ENCODE measurements at regions of chr2 and their contacts with region 1.

Region 1: GRCh38 chr2:197239434-197239833 is 71.1 kb downstream of the ANKRD44 start:
- DNase-seq: peak in 1 of 5 donors; percentile 22
- H3K4me3 ChIP-seq: peak overlapping the region; percentile 45
- H3K4me3 Mint-ChIP-seq: peak overlapping the region; percentile 76 to 92 (median 87)
- H3K27ac ChIP-seq: peak overlapping the region; percentile 20
- H3K27ac Mint-ChIP-seq: peak overlapping the region; percentile 74 to 99 (median 94)
- H3K4me1 ChIP-seq: peaks cover 97% of the 10 kb centered on the region
- H3K4me1 Mint-ChIP-seq: peaks cover 85 to 98% (median 92%) of the 10 kb centered on the region in 3 donors
- H3K27me3 ChIP-seq: no peaks in the 10 kb centered on the region
- H3K27me3 Mint-ChIP-seq: no peaks in the 10 kb centered on the region

Region 2: DNA sequence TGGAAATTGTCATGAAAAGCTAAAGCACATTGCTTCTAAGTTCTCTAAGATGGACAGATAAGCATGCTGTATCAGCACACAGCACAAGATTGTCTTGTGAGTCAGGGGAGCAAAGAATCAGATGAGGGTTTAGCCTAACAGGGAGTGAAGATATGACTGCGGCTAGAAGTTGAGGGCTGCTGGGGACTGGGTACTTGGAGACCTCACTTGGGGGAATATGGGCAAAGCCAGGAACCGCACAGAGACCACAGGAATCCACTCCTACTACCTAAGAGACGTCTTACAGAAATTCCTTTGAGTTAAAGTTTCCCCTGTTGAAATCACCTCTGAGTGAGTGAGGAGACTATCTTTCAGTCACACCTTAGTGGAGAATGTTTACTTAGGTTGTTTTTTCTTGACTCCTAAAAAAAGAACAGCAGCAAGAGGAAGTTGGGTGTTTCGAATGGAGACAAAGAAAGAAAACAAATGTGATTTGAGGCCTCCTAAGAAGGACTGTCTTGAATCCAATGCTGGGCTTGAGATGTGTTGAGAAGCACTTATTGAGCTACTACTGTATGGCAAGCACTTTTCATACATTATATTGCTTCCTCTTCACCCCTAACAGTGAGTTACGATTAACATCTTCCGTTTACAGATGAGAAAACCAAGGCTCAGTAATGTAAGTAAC is 29.6 kb before region 1 on chr2:
- CTCF ChIA-PET with region 1: interaction called, 12 read pairs
- POLR2A ChIA-PET with region 1: interaction called, 5 read pairs
- DNase-seq: peak; percentile 34 to 64 (median 36)
- H3K4me3 ChIP-seq: peak overlapping the region; percentile 21
- H3K4me3 Mint-ChIP-seq: peak overlapping the region; percentile 36 to 89 (median 74)
- H3K27ac ChIP-seq: peak overlapping the region; percentile 26
- H3K27ac Mint-ChIP-seq: peak overlapping the region; percentile 92 to 100 (median 96)
- H3K4me1 ChIP-seq: peaks cover 99% of the 10 kb centered on the region
- H3K4me1 Mint-ChIP-seq: peaks cover 97 to 99% (median 98%) of the 10 kb centered on the region in 3 donors
- H3K27me3 ChIP-seq: no peaks in the 10 kb centered on the region
- H3K27me3 Mint-ChIP-seq: no peaks in the 10 kb centered on the region

Region 3: DNA sequence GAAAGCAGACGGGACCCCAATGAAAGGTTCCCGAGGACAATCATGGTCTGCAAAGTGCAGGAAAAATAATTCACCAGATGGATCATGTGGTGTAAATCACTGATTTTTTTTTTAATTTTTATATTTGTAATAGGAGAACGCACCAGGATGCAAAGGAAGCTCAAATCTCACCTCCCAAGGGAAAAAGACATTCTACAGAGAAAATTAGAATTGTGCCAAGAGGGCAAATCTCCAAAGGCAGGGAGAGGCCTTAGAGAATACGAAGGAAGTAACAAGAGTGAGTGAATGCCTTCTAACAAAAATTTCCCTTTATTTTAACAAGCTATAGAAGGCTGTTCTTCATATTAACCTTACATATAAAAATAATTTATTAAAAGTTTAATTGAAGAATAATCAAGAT is 19.8 kb before region 1 on chr2:
- CTCF ChIA-PET with region 1: interaction called, 5 read pairs
- POLR2A ChIA-PET with region 1: interaction called, 16 read pairs
- DNase-seq: no peak
- H3K4me3 ChIP-seq: no peak overlapping the region
- H3K4me3 Mint-ChIP-seq: no peak overlapping the region
- H3K27ac ChIP-seq: no peak overlapping the region
- H3K27ac Mint-ChIP-seq: peak overlapping the region in 5 of 8 donors; percentile 19 to 56 (median 49)
- H3K4me1 ChIP-seq: peaks cover 72% of the 10 kb centered on the region
- H3K4me1 Mint-ChIP-seq: peaks cover 74 to 92% (median 91%) of the 10 kb centered on the region in 3 donors
- H3K27me3 ChIP-seq: no peaks in the 10 kb centered on the region
- H3K27me3 Mint-ChIP-seq: no peaks in the 10 kb centered on the region

Region 4: GRCh38 chr2:197255543-197255942 is 16.1 kb after region 1 on chr2:
- CTCF ChIA-PET with region 1: interaction called, 13 read pairs
- POLR2A ChIA-PET with region 1: interaction called, 5 read pairs
- DNase-seq: peak; percentile 62 to 85 (median 71)
- H3K4me3 ChIP-seq: peak overlapping the region; percentile 49
- H3K4me3 Mint-ChIP-seq: peak overlapping the region; percentile 67 to 83 (median 78)
- H3K27ac ChIP-seq: peak overlapping the region; percentile 60
- H3K27ac Mint-ChIP-seq: peak overlapping the region; percentile 89 to 99 (median 96)
- H3K4me1 ChIP-seq: peaks cover 78% of the 10 kb centered on the region
- H3K4me1 Mint-ChIP-seq: peaks cover 72 to 91% (median 88%) of the 10 kb centered on the region in 3 donors
- H3K27me3 ChIP-seq: no peaks in the 10 kb centered on the region
- H3K27me3 Mint-ChIP-seq: no peaks in the 10 kb centered on the region

Region 5: DNA sequence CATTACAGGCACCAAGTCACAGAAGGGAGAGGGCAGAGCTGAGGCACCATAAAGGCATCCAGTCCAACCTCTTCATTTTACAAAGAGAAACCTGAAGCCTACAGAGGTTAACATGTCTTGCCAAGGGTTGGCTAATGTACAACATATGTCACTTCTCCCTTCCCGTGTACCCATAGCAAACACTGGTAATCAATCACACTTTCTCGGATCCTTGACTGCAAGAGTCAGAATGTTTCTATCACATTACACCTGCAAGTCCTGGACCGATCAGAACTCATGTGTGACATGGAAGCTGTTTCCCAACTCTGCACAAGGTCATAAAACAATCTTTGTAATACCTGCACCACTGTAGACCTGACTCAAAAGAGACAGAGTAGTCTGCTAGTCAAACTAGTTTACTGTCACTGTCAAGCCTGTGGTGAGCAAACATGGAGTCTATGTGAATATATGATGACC is 65.2 kb after region 1 on chr2:
- CTCF ChIA-PET with region 1: interaction called, 13 read pairs
- POLR2A ChIA-PET with region 1: interaction called, 12 read pairs
- DNase-seq: no peak
- H3K4me3 ChIP-seq: peak overlapping the region; percentile 35
- H3K4me3 Mint-ChIP-seq: peak overlapping the region; percentile 84 to 98 (median 89)
- H3K27ac ChIP-seq: peak overlapping the region; percentile 14
- H3K27ac Mint-ChIP-seq: peak overlapping the region; percentile 94 to 99 (median 96)
- H3K4me1 ChIP-seq: peaks cover 82% of the 10 kb centered on the region
- H3K4me1 Mint-ChIP-seq: peaks cover 78 to 98% (median 91%) of the 10 kb centered on the region in 3 donors
- H3K27me3 ChIP-seq: no peaks in the 10 kb centered on the region
- H3K27me3 Mint-ChIP-seq: no peaks in the 10 kb centered on the region

Region 6: GRCh38 chr2:197453161-197453914 is 213.9 kb after region 1 on chr2 and contains the start of gene COQ10B:
- CTCF ChIA-PET with region 1: no interaction called
- POLR2A ChIA-PET with region 1: no interaction called
- DNase-seq: peak; percentile 97 to 100 (median 99)
- H3K4me3 ChIP-seq: peak within 1 kb of the TSS; percentile 83
- H3K4me3 Mint-ChIP-seq: peak within 1 kb of the TSS; percentile 94 to 100 (median 99)
- H3K27ac ChIP-seq: peak within 1 kb of the TSS; percentile 99
- H3K27ac Mint-ChIP-seq: peak within 1 kb of the TSS; percentile 97 to 100 (median 100)
- H3K4me1 ChIP-seq: peaks cover 29% of the 10 kb centered on the region
- H3K4me1 Mint-ChIP-seq: peaks cover 40 to 54% (median 51%) of the 10 kb centered on the region in 3 donors
- H3K27me3 ChIP-seq: no peaks in the 10 kb centered on the region
- H3K27me3 Mint-ChIP-seq: peaks cover 0 to 5% of the 10 kb centered on the region in 2 donors
- total RNA-seq, gene COQ10B: 23.4 to 23.7 TPM